K562 (cell line): ENCODE measurements at regions of chr1 and their contacts with region 1.

Region 1: GRCh38 chr1:150387200-150387599 is 23.3 kb downstream of the RPRD2 start:
- DNase-seq: no peak
- ATAC-seq: peak; percentile 15; the same call in 2 of the 3 replicates
- H3K4me3 ChIP-seq: no peak overlapping the region
- H3K27ac ChIP-seq: no peak overlapping the region
- H3K4me1 ChIP-seq: peaks cover 9 to 11% of the 10 kb centered on the region in 2 experiments
- H3K27me3 ChIP-seq: no peaks in the 10 kb centered on the region
- CTCF ChIP-seq: no peak
- EP300 ChIP-seq: no peak
- POLR2A ChIP-seq: no peak
- RAD21 ChIP-seq: no peak

Region 2: GRCh38 chr1:150363426-150364230 is 23.6 kb before region 1 on chr1 and contains the start of gene RPRD2:
- CTCF ChIA-PET with region 1: no interaction called
- POLR2A ChIA-PET with region 1: interaction called, 18 read pairs
- in situ Hi-C with region 1: no loop called
- intact Hi-C with region 1: no loop called
- DNase-seq: peak; percentile 98 to 100 (median 99)
- ATAC-seq: peak; percentile 93
- H3K4me3 ChIP-seq: peak within 1 kb of the TSS; percentile 69
- H3K27ac ChIP-seq: peak within 1 kb of the TSS; percentile 99
- H3K4me1 ChIP-seq: peaks cover 8 to 13% of the 10 kb centered on the region in 2 experiments
- H3K27me3 ChIP-seq: no peaks in the 10 kb centered on the region
- CTCF ChIP-seq: peak in 1 of 3 experiments; percentile 9; a peak in 1 of 6 replicates
- EP300 ChIP-seq: peak; percentile 59; the same call in 1 of the 2 replicates
- POLR2A ChIP-seq: peak; percentile 96
- RAD21 ChIP-seq: no peak
- polyA plus RNA-seq, gene RPRD2: 1.5 to 4.4 TPM

Region 3: GRCh38 chr1:150372580-150372979 is 14.6 kb before region 1 on chr1:
- CTCF ChIA-PET with region 1: no interaction called
- POLR2A ChIA-PET with region 1: interaction called, 11 read pairs
- in situ Hi-C with region 1: no loop called
- intact Hi-C with region 1: no loop called
- DNase-seq: no peak
- ATAC-seq: peak; percentile 17; the same call in 2 of the 3 replicates
- H3K4me3 ChIP-seq: no peak overlapping the region
- H3K27ac ChIP-seq: no peak overlapping the region; the same call in 2 of the 3 replicates
- H3K4me1 ChIP-seq: peaks cover 4 to 9% of the 10 kb centered on the region in 2 experiments; a peak in 4 of 5 replicates
- H3K27me3 ChIP-seq: no peaks in the 10 kb centered on the region
- CTCF ChIP-seq: no peak
- EP300 ChIP-seq: no peak
- POLR2A ChIP-seq: no peak
- RAD21 ChIP-seq: no peak

Region 4: GRCh38 chr1:150548632-150549495 is 161.7 kb after region 1 on chr1 and contains the start of gene ADAMTSL4:
- CTCF ChIA-PET with region 1: no interaction called
- POLR2A ChIA-PET with region 1: no interaction called
- in situ Hi-C with region 1: no loop called
- intact Hi-C with region 1: no loop called
- DNase-seq: peak; percentile 84 to 94 (median 90)
- ATAC-seq: peak; percentile 54
- H3K4me3 ChIP-seq: peak within 1 kb of the TSS; percentile 75
- H3K27ac ChIP-seq: peak within 1 kb of the TSS; percentile 87
- H3K4me1 ChIP-seq: peaks cover 53 to 84% of the 10 kb centered on the region in 2 experiments
- H3K27me3 ChIP-seq: no peaks in the 10 kb centered on the region
- CTCF ChIP-seq: peak in 2 of 3 experiments; percentile 3; a peak in 2 of 6 replicates
- EP300 ChIP-seq: no peak
- POLR2A ChIP-seq: peak; percentile 70
- RAD21 ChIP-seq: peak in 1 of 2 experiments; percentile 9; a peak in 1 of 4 replicates
- polyA plus RNA-seq, gene ADAMTSL4: 12.7 to 14.8 TPM